ENCODE measurements at regions of chr7 and their contacts with region 1.

Region 1: GRCh38 chr7:56033671-56034432 is 17.4 kb downstream of the PSPH start:
- DNase-seq: peak; percentile 92
- ATAC-seq: peak; percentile 98
- H3K4me3 Mint-ChIP-seq: peak overlapping the region; percentile 92
- H3K27ac Mint-ChIP-seq: peak overlapping the region; percentile 99
- H3K4me1 Mint-ChIP-seq: peaks cover 7% of the 10 kb centered on the region
- H3K27me3 Mint-ChIP-seq: no peaks in the 10 kb centered on the region
- CTCF ChIP-seq: no peak

Region 2: DNA sequence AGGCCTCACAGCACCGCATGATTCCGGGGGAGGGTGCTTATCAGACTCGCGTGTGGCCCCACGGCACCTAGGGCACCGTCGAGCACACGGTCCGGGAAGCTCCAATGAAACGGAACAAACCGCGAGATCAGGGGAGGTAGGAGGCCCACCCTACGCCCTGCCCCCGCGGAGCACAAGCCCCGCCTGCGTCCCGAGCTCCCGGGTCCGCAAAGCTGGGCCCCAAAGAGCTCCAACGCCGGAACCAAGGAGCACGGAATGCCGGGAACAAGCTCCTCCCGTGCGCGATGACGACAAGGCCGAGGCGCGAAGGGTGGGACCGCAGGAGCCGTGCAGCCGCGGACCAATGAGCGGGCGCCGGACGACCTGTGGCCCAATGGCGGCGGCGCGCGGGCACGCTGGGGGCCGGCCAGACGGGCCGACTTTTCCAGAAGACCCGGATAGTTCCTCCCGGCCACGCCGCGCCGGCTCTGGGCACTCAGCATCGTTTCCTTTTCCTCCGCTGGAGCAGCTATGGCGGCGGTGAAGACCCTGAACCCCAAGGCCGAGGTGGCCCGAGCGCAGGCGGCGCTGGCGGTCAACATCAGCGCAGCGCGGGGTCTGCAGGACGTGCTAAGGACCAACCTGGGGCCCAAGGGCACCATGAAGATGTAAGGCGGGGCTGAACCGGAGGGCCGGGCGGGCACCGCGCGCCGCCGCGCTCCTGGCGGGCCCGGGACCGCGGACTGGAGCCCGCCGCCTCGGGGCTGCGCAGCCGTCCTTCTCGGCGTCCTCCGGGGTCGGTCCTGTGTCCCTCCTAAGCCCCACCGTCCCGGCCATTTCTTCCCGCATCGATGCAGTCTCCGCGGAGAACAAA is 17.7 kb after region 1 on chr7 and contains the starts of genes CCT6A and PSPH:
- CTCF ChIA-PET with region 1: interaction called, 11 read pairs
- POLR2A ChIA-PET with region 1: interaction called, 49 read pairs
- DNase-seq: peak; percentile 98
- ATAC-seq: peak; percentile 97
- H3K4me3 Mint-ChIP-seq: peak within 1 kb of the TSS; percentile 96
- H3K27ac Mint-ChIP-seq: peak within 1 kb of the TSS; percentile 99
- H3K4me1 Mint-ChIP-seq: peaks cover 17% of the 10 kb centered on the region
- H3K27me3 Mint-ChIP-seq: no peaks in the 10 kb centered on the region
- CTCF ChIP-seq: no peak
- total RNA-seq, gene CCT6A: 208 to 246 TPM (median 209 TPM) in 3 replicates
- total RNA-seq, gene PSPH: 43.7 to 49.3 TPM (median 49.2 TPM) in 3 replicates

Region 3: GRCh38 chr7:56063882-56064625 is 30.2 kb after region 1 on chr7 and contains the start of gene SUMF2:
- CTCF ChIA-PET with region 1: interaction called, 3 read pairs
- POLR2A ChIA-PET with region 1: interaction called, 11 read pairs
- DNase-seq: peak; percentile 88
- ATAC-seq: peak; percentile 90
- H3K4me3 Mint-ChIP-seq: peak within 1 kb of the TSS; percentile 90
- H3K27ac Mint-ChIP-seq: peak within 1 kb of the TSS; percentile 83
- H3K4me1 Mint-ChIP-seq: peaks cover 16% of the 10 kb centered on the region
- H3K27me3 Mint-ChIP-seq: no peaks in the 10 kb centered on the region
- CTCF ChIP-seq: no peak
- total RNA-seq, gene SUMF2: 99.6 to 105 TPM (median 99.6 TPM) in 3 replicates

Region 4: DNA sequence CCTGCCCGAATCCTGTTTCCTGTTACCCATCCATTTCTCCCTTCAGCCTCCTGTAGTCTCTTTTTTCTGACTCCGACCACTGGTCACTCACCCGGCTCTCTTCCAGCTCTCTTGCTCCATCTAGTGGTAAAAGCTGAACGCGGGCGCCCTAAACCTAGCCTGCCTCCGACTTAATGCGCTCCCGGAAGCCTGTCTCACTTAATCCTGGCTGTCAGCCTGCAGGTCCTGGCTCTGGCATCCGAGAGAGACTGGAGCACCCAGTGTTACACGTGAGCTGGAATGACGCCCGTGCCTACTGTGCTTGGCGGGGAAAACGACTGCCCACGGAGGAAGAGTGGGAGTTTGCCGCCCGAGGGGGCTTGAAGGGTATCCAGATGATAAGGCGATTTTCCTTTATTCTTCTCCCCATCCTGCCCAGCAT is 40.5 kb after region 1 on chr7:
- CTCF ChIA-PET with region 1: interaction called, 11 read pairs
- POLR2A ChIA-PET with region 1: interaction called, 4 read pairs
- DNase-seq: peak; percentile 86
- ATAC-seq: peak; percentile 94
- H3K4me3 Mint-ChIP-seq: no peak overlapping the region
- H3K27ac Mint-ChIP-seq: peak overlapping the region; percentile 98
- H3K4me1 Mint-ChIP-seq: peaks cover 3% of the 10 kb centered on the region
- H3K27me3 Mint-ChIP-seq: no peaks in the 10 kb centered on the region
- CTCF ChIP-seq: peak; percentile 85

Region 5: GRCh38 chr7:56087445-56087844 is 53.6 kb after region 1 on chr7:
- CTCF ChIA-PET with region 1: no interaction called
- POLR2A ChIA-PET with region 1: no interaction called
- DNase-seq: no peak
- ATAC-seq: no peak
- H3K4me3 Mint-ChIP-seq: no peak overlapping the region
- H3K27ac Mint-ChIP-seq: no peak overlapping the region
- H3K4me1 Mint-ChIP-seq: no peaks in the 10 kb centered on the region
- H3K27me3 Mint-ChIP-seq: no peaks in the 10 kb centered on the region
- CTCF ChIP-seq: no peak

Region 6: DNA sequence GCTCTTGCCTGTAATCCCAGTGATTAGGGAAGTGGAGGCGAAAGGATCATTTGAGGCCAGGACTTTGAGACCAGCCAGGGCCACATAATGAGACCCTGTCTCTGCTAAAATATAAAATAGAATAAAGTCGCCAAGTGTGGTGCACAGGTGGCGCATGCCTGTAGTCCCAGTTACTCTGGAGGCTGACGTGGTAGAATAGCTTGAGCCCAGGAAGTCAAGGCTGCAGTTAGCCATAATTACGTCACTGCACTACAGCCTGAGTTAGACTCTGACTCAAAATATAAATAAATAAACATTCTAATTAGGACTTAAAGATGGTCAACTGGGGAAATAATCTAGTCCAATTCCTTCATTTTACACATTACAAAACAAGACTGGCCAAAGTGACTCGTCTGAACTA is 71.7 kb after region 1 on chr7:
- CTCF ChIA-PET with region 1: no interaction called
- POLR2A ChIA-PET with region 1: no interaction called
- DNase-seq: no peak
- ATAC-seq: no peak
- H3K4me3 Mint-ChIP-seq: no peak overlapping the region
- H3K27ac Mint-ChIP-seq: no peak overlapping the region
- H3K4me1 Mint-ChIP-seq: no peaks in the 10 kb centered on the region
- H3K27me3 Mint-ChIP-seq: peaks cover 9% of the 10 kb centered on the region; the same call in 1 of the 2 replicates
- CTCF ChIP-seq: no peak

Region 7: DNA sequence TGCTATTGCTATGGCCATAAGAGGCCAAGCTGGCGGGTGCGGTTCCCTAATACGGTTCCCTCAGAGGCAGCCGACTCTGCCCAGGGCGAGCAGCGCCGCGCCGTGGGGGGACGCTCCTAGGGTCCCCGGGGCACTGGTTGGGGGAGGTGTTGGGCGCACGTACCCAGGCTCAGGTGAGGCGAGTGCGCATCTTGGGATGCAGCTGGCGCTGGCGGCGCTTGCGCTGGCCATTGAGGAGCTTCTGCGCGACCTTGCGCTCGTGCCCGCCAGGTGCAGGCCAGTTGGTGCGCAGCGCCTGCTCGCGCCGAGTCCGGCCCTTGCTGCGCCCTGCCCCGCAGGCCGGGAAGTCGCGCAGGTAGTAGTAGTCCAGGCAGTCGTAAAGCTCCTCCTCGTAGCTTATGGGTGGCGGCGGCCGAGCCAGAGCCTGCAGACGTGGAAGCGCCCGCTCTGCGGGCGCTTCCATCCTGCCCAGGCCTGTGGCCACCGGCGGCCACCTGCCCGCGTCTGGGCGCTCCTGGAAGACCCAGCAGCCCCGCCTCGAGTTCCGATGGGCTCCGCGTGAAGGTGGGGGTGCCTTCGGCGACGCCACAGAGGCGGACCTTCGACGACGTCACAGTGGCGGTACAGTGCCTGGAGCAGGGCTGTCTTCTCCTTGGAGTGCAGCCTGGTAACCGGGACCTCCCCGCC is 82.1 kb after region 1 on chr7 and contains the start of gene NUPR2:
- CTCF ChIA-PET with region 1: no interaction called
- POLR2A ChIA-PET with region 1: no interaction called
- DNase-seq: no peak
- ATAC-seq: no peak
- H3K4me3 Mint-ChIP-seq: no peak within 1 kb of the TSS
- H3K27ac Mint-ChIP-seq: no peak within 1 kb of the TSS
- H3K4me1 Mint-ChIP-seq: no peaks in the 10 kb centered on the region
- H3K27me3 Mint-ChIP-seq: peaks cover 11% of the 10 kb centered on the region; the same call in 1 of the 2 replicates
- CTCF ChIP-seq: no peak
- total RNA-seq, gene NUPR2: not detected in 3 replicates

Measured in WTC11 (cell line).